ENCODE measurements at regions of chr9 and their contacts with region 1.

Region 1: GRCh38 chr9:112288029-112288428 is 45.4 kb downstream of the PTBP3 start:
- DNase-seq: no peak
- H3K4me3 ChIP-seq: no peak overlapping the region
- H3K27ac ChIP-seq: no peak overlapping the region
- H3K4me1 ChIP-seq: no peaks in the 10 kb centered on the region
- H3K27me3 ChIP-seq: no peaks in the 10 kb centered on the region
- CTCF ChIP-seq: no peak
- POLR2A ChIP-seq: no peak

Region 2: GRCh38 chr9:111815277-111816070 is 472.6 kb before region 1 on chr9:
- intact Hi-C with region 1: no loop called
- DNase-seq: no peak
- H3K4me3 ChIP-seq: no peak overlapping the region
- H3K27ac ChIP-seq: no peak overlapping the region
- H3K4me1 ChIP-seq: no peaks in the 10 kb centered on the region
- H3K27me3 ChIP-seq: no peaks in the 10 kb centered on the region
- CTCF ChIP-seq: no peak
- POLR2A ChIP-seq: no peak

Region 3: DNA sequence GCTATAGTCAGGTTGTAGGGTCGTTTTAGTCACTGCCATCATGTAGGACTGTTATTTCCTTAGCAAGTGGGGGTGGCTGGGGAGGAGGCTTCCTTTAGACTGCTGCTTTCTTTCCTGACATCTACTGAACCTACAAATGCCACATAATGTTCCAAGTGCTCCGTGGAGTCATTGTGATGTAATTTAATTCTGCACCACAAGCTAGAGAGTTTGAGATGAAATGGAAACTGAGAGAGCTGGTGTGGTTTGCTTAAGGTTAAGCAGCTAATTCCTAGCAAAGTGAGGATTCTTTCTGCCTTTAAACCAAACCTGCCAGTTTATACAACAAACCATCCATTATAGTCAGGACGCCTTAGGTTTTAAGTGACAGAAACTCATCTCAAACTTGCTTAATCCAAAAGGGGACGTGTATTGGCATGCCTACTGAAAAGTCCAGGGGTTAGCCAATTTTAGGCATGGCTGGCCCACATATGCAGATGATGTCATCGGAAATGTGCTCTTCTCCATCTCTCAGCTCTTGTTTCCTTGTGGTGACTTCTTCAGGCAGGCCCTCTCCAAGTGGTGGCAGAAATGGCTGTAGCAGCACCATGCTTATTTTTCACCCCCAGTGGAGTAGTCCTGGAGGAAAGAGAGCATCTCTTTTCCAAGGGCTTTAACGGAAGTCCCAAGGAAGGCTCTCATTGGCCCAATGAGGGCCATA is 1618.5 kb after region 1 on chr9:
- intact Hi-C with region 1: loop called (anchors 10 kb)
- DNase-seq: peak in 1 of 2 donors; percentile 43
- H3K4me3 ChIP-seq: no peak overlapping the region
- H3K27ac ChIP-seq: peak overlapping the region; percentile 37 to 84
- H3K4me1 ChIP-seq: peaks cover 6 to 13% of the 10 kb centered on the region in 2 donors
- H3K27me3 ChIP-seq: no peaks in the 10 kb centered on the region
- CTCF ChIP-seq: no peak
- POLR2A ChIP-seq: no peak

Measured in breast epithelium (tissue), 4 donors.